ENCODE measurements at regions of chr22 and their contacts with region 1.

Region 1: DNA sequence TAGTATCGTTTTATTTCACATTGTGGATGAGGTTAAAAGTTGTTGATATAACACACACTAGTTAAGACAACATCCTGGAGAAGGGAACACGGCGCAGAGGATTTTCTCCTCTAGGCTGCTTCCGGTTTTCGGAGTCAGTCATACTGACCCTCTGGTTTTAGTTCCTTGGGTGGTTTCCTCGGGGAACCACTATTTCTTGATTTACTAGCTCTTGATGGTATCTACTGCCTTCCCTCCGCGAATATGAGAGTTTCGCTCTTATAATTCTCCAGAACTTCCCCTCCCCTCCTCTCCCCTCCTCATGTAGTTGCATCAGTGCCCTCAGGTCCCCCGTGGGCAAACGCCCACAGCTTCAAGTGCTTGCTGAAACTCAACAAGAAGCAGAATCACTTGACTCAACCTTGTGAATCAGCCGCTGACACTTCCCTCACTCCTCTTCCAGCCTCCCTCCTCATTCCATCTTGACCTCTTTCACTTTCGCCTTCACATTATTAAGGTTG is 15.9 kb upstream of the APOBEC3A start:
- DNase-seq: peak; percentile 88
- ATAC-seq: peak; percentile 88
- H3K4me3 Mint-ChIP-seq: peak overlapping the region; percentile 59
- H3K27ac Mint-ChIP-seq: peak overlapping the region; percentile 87
- H3K4me1 Mint-ChIP-seq: peaks cover 42% of the 10 kb centered on the region
- H3K27me3 Mint-ChIP-seq: peaks cover 36% of the 10 kb centered on the region

Region 2: DNA sequence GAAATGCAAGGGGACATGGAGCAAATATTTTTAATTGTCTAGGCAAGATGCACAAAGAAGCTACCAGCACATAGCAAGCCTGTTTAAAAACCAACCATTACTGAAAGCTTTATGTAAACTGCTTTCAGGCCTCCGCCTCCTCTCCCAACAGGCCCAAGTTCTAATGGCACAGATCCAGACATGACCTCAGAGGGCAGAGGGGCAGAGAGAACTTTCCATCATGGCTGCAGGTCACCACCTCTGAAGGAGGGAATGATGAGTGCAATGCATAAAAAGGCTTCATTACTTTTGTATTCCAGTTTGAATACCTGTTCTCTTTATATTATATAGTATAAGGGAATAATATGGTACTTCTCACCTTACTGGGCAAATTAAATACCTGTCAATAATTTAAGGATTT is 450.6 kb before region 1 on chr22:
- CTCF ChIA-PET with region 1: no interaction called
- POLR2A ChIA-PET with region 1: no interaction called
- intact Hi-C with region 1: no loop called
- DNase-seq: no peak
- ATAC-seq: no peak
- H3K4me3 Mint-ChIP-seq: no peak overlapping the region
- H3K27ac Mint-ChIP-seq: peak overlapping the region; percentile 87
- H3K4me1 Mint-ChIP-seq: peaks cover 66% of the 10 kb centered on the region
- H3K27me3 Mint-ChIP-seq: no peaks in the 10 kb centered on the region

Region 3: GRCh38 chr22:38831166-38831945 is 110.2 kb before region 1 on chr22:
- CTCF ChIA-PET with region 1: no interaction called
- POLR2A ChIA-PET with region 1: no interaction called
- intact Hi-C with region 1: no loop called
- DNase-seq: no peak
- ATAC-seq: no peak
- H3K4me3 Mint-ChIP-seq: no peak overlapping the region
- H3K27ac Mint-ChIP-seq: peak overlapping the region; percentile 31
- H3K4me1 Mint-ChIP-seq: no peaks in the 10 kb centered on the region
- H3K27me3 Mint-ChIP-seq: no peaks in the 10 kb centered on the region

Region 4: DNA sequence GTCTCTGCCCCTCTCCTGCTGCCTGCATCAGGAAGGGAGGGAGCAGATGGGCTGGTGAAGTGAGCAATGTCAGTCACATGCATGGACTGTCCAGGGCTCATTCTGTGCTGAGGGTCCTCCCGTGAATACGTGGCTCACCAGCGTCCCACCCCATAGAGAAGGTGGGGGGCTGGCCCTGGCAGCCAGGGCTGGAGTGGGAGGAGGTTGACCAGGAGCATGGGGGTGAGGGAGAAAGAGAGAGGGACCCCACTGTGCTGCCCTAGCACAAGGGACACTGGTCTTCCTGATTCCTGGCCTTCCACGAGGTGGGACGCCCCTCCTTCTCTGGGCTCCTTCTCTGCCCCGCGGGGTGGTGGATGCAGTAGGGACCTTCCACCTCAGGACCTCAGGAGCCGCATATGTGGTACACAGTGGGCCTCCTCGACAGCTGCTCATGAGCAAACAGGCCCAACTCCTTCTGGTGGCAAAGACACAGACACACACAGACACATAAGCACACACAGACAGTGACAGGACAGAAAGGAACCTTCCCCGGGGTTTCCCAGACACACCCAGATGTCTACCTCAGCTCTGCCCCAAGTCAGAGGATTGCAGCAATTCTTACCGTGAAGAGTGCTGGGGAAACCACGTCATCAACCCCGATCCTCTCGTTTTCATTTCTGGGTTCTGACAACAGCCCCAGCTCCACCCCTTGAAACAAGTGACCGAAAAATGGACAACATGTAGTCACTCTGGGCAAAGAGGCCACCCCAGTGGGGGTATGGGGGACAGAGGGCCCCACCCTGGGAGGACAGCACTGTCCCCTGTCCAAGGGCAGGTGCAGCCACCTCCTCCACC is 12.3 kb after region 1 on chr22:
- CTCF ChIA-PET with region 1: interaction called, 8 read pairs
- POLR2A ChIA-PET with region 1: interaction called, 19 read pairs
- intact Hi-C with region 1: loop called (anchors 1 kb)
- DNase-seq: peak; percentile 90
- ATAC-seq: peak; percentile 95
- H3K4me3 Mint-ChIP-seq: peak overlapping the region; percentile 60
- H3K27ac Mint-ChIP-seq: peak overlapping the region; percentile 93
- H3K4me1 Mint-ChIP-seq: peaks cover 24% of the 10 kb centered on the region
- H3K27me3 Mint-ChIP-seq: peaks cover 8% of the 10 kb centered on the region

Region 5: GRCh38 chr22:39013942-39014722 is 72.6 kb after region 1 on chr22 and contains the start of gene APOBEC3C:
- CTCF ChIA-PET with region 1: no interaction called
- POLR2A ChIA-PET with region 1: no interaction called
- intact Hi-C with region 1: no loop called
- DNase-seq: peak; percentile 89
- ATAC-seq: peak; percentile 96
- H3K4me3 Mint-ChIP-seq: peak within 1 kb of the TSS; percentile 93
- H3K27ac Mint-ChIP-seq: peak within 1 kb of the TSS; percentile 95
- H3K4me1 Mint-ChIP-seq: peaks cover 33% of the 10 kb centered on the region
- H3K27me3 Mint-ChIP-seq: no peaks in the 10 kb centered on the region
- total RNA-seq, gene APOBEC3C: 75.3 to 98.5 TPM

Region 6: DNA sequence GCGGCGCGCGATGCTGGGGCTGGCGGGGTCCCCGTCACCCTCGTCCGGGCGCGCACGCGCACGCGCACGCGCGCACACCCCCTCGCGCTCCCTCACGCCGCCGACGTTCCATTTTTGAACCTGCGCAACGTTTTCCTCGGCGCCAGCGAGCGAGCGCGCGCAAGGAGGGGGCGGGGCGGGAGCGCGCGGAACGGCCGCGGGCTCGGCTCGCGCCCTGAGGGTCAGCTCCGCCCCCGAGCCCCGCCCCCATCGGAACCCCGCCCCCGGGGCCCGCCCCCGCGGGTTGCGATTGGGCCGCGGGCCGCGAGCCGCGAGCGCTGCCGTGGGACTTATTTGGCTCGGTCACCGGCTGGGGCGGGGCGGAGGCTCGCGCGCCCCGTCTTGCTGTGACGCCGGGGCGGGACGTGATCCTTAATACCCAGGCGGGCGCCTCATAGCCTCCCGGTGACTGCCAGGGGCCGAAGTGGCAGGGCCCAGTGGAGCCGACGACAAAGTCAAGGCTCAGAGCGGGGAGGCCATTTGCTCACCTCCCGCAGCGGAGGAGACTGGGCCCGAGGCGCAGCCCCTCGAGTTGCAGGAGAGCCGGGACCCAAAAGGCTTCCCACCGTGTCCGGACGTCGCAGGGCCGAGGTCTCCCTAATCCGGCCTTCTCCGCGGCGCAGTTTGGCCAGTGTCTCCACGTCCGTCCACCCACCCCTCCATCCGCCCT is 211.1 kb after region 1 on chr22 and contains the start of gene CBX7:
- CTCF ChIA-PET with region 1: no interaction called
- POLR2A ChIA-PET with region 1: no interaction called
- intact Hi-C with region 1: loop called in 1 of 2 experiments (anchors 1 kb)
- DNase-seq: peak; percentile 95
- ATAC-seq: peak; percentile 83
- H3K4me3 Mint-ChIP-seq: peak within 1 kb of the TSS; percentile 76
- H3K27ac Mint-ChIP-seq: peak within 1 kb of the TSS; percentile 72
- H3K4me1 Mint-ChIP-seq: peaks cover 40% of the 10 kb centered on the region
- H3K27me3 Mint-ChIP-seq: peaks cover 13% of the 10 kb centered on the region
- total RNA-seq, gene CBX7: 19.9 to 20.3 TPM

Measured in activated CD4-positive, alpha-beta T cell treated with anti-CD3 and anti-CD28 coated beads for 36 hours (primary cell).